Activated naive CD4-positive, alpha-beta T cell treated with anti-CD3 and anti-CD28 coated beads for 36 hours (primary cell): ENCODE measurements at regions of chr19 and their contacts with region 1.

Region 1: DNA sequence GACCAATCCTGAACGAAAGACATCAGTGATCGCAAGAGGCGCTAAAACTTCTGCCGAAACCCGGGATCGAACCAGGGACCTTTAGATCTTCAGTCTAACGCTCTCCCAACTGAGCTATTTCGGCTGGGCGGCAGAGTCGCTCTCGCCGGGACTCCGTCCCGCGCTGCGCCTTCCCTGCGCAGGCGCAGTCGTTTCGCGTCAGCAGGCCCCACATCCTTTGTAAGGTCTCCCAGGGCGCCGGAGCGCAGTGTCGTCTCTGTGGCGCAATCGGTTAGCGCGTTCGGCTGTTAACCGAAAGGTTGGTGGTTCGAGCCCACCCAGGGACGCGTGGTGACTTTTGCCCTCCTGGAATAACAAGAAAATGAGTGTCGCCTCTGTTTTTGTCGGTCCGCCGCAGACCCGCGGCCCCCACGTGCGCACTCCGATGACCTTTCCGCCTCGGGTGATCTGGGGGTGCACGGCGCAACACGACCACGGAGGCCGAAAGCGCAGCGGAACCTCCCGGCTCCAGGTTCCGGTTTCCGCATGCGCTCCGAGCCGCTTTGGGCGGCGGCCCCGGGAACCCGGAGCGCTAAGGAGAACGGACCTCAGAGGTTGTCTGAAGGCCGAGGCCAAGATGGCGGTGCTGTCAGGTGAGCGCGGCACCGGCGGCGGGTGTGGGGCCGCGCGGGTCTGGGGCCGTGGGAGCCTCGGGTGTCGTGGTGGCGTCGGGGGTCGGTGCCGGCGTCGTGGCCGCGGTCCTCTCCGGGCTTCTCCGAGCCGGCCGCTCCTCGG is at the start of gene NDUFS7:
- DNase-seq: peak; percentile 93
- H3K4me3 Mint-ChIP-seq: peak within 1 kb of the TSS; percentile 84
- H3K27ac Mint-ChIP-seq: peak within 1 kb of the TSS; percentile 98
- H3K4me1 Mint-ChIP-seq: peaks cover 26% of the 10 kb centered on the region
- H3K27me3 Mint-ChIP-seq: peaks cover 3% of the 10 kb centered on the region
- total RNA-seq, gene NDUFS7: 138 to 148 TPM

Region 2: GRCh38 chr19:1103708-1104310 is 279.7 kb before region 1 on chr19 and contains the start of gene GPX4:
- CTCF ChIA-PET with region 1: no interaction called
- intact Hi-C with region 1: no loop called
- DNase-seq: peak; percentile 99
- H3K4me3 Mint-ChIP-seq: peak within 1 kb of the TSS; percentile 72
- H3K27ac Mint-ChIP-seq: peak within 1 kb of the TSS; percentile 79
- H3K4me1 Mint-ChIP-seq: peaks cover 54% of the 10 kb centered on the region
- H3K27me3 Mint-ChIP-seq: no peaks in the 10 kb centered on the region
- total RNA-seq, gene GPX4: 244 to 253 TPM

Region 3: DNA sequence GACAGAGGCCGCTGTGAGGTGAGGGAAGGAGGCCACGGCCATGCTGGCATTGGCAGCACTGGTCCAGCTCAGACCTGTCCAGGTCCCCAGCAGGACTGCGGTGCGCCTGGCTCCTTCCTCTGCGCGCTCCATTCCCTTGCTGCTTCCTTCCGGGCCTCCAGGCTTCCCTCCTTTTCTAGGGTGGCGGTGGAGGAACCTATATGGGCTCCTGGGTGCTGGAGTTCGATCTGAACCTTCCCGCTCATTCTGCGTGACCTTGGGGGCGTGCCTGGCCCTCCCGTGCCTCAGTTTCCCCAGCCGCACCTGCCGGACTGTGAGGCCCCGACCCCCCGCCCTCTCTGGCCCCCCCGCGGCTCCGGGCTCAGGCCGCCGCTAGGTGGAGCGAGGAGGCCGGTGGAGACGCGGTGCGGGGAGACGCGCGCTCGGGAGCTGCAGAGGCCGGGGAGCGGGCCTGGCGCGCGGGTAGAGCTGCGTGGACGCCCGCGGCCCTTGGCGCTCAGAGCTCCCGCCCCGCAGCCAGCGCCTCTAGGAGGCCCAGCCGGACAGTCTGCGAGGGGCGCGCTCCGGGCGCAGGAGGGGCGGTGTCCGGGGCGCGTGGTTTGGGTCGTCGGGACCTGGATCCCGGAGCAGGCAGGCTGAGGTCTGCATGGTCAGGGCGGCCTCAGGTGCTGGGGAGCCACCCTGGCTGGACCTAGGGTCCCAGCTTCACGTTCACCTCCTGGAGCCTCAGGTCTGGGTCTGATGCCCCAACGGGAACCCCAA is 67.8 kb before region 1 on chr19:
- CTCF ChIA-PET with region 1: interaction called, 4 read pairs
- intact Hi-C with region 1: loop called (anchors 5 kb)
- DNase-seq: peak; percentile 51
- H3K4me3 Mint-ChIP-seq: no peak overlapping the region
- H3K27ac Mint-ChIP-seq: no peak overlapping the region
- H3K4me1 Mint-ChIP-seq: no peaks in the 10 kb centered on the region
- H3K27me3 Mint-ChIP-seq: peaks cover 24% of the 10 kb centered on the region

Region 4: DNA sequence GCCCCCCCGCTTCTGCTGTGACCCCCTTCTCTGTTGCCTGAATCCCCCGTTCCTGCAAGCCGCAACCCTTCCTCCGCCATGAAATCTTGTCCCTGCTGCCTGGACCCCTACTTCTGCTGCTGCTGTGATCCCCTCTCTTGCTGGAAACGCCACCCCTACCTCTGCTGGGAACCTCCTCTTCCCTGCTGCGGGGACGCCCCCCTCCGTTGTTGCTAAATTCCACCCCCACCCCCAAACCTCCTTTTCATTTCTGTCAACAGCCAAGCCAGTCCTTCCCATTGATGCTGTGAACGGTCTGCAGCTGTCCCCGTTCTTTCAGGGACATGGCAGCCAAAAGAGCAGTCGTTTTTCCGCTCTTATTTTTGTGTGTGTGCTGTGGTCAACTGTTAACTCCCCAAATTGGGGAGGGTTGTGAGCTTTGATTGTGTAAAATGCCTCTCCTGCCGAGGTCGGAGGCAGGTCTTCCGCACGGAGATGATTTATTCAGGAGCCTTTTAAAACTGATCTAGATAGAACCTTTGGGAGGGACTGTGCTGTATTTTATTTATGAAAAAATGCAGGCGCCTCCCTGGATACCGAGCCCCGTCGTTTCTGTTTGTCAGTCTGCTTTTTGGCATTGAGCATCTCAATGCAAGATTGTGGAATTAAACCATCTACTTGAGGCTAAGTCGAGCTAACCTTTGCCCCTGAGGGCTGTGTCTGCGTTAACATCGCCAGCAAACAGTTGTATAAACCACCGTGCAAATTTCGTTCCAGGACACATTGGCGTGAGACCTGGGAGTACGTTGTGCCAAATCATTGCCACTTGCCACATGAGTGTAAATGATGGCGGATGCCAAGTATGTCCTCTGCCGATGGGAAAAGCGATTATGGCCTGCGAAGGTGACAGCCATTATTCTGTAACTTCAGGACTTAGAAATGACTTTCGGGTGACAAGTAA is 27.7 kb before region 1 on chr19:
- CTCF ChIA-PET with region 1: no interaction called
- intact Hi-C with region 1: loop called (anchors 1 kb)
- DNase-seq: peak; percentile 41
- H3K4me3 Mint-ChIP-seq: peak overlapping the region; percentile 83
- H3K27ac Mint-ChIP-seq: peak overlapping the region; percentile 59
- H3K4me1 Mint-ChIP-seq: peaks cover 15% of the 10 kb centered on the region
- H3K27me3 Mint-ChIP-seq: no peaks in the 10 kb centered on the region

Region 5: DNA sequence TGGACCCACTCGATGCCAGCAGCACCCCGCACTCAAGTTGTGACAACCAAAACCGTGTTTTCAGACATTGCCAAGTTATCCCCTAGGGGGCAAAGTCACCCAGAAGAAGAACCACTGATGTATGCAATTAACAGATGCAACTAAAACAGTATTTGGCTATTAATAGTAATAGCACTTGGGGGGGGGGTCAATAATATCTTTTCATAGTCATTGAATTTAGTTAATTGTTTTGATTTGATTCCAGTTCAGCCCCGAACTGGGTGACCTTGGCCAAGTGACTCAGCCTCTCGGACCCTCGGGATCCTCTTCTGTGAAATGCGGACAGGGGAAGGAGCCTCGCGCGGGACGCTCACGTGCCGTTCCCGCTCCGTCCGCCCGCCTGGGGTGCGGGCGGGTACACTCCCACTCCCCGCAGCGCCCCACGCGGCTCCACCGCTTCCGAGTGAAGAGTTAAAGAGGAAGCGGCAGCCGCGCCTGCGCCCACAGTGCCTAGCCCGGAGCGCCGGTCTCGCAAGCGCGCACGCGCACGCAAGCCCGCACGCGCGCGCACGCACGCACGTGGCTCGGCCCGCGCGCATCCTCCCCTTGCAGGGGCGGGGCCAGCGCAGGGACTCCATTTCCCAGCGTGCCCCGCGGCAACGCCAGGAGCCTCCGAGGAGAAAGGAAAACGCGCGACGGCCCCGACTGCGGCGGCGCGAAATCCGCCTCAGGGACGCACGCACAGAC is 23.4 kb after region 1 on chr19:
- CTCF ChIA-PET with region 1: no interaction called
- intact Hi-C with region 1: loop called (anchors 1 kb)
- DNase-seq: peak; percentile 98
- H3K4me3 Mint-ChIP-seq: peak overlapping the region; percentile 69
- H3K27ac Mint-ChIP-seq: peak overlapping the region; percentile 81
- H3K4me1 Mint-ChIP-seq: peaks cover 43% of the 10 kb centered on the region
- H3K27me3 Mint-ChIP-seq: peaks cover 5% of the 10 kb centered on the region

Region 6: DNA sequence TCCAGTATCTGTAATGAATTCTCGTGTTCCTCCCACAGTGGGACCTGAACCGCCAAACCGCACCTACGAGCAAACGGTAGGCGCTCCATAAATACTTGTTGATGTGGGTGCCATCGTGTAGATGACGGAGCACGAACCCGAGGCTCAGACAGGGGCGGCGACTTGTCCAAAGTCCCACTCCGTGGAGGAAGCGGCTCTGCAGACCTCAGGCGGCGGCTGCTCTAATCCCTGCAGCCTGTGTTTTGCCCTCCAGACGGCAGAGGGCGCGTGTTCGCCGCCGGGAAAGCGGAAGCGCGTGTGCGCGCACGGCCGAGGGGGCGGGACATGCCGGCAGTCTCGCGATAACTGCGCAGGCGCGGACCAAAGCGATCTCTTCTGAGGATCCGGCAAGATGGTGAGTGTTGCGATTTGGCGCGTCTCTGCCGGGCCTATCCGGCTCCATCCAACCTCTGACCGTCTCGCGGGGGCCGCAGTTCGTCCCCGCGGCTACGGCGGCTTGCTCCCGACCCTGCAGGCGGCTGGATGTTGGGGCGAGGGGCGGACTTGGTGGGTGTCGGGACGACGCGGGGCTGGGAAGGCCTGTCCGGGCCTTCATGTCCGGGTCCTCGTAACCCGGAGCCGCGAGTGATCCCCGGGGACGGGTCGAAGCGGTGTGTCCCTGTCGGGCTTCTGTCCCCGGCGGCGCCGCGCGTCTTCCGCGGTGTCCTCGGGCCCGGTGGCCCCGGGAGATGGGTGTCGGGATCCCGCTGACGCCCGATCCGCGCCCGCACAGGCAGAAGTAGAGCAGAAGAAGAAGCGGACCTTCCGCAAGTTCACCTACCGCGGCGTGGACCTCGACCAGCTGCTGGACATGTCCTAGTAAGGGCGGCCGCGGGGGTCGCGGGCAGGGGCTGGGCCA is 54.8 kb after region 1 on chr19 and contains the start of gene RPS15:
- CTCF ChIA-PET with region 1: no interaction called
- intact Hi-C with region 1: loop called (anchors 2 kb)
- DNase-seq: peak; percentile 96
- H3K4me3 Mint-ChIP-seq: peak within 1 kb of the TSS; percentile 98
- H3K27ac Mint-ChIP-seq: peak within 1 kb of the TSS; percentile 99
- H3K4me1 Mint-ChIP-seq: peaks cover 40% of the 10 kb centered on the region
- H3K27me3 Mint-ChIP-seq: no peaks in the 10 kb centered on the region
- total RNA-seq, gene RPS15: 1,902 to 1,906 TPM

Region 7: GRCh38 chr19:1478934-1479707 is 95.6 kb after region 1 on chr19 and contains the start of gene C19orf25:
- CTCF ChIA-PET with region 1: no interaction called
- intact Hi-C with region 1: loop called (anchors 1 kb)
- DNase-seq: peak; percentile 96
- H3K4me3 Mint-ChIP-seq: peak within 1 kb of the TSS; percentile 99
- H3K27ac Mint-ChIP-seq: peak within 1 kb of the TSS; percentile 95
- H3K4me1 Mint-ChIP-seq: peaks cover 15% of the 10 kb centered on the region
- H3K27me3 Mint-ChIP-seq: no peaks in the 10 kb centered on the region
- total RNA-seq, gene C19orf25: 17.5 to 20.8 TPM

Region 8: GRCh38 chr19:1592755-1593500 is 209.4 kb after region 1 on chr19 and contains the start of gene MBD3:
- CTCF ChIA-PET with region 1: no interaction called
- intact Hi-C with region 1: loop called (anchors 1 kb)
- DNase-seq: peak; percentile 84
- H3K4me3 Mint-ChIP-seq: peak within 1 kb of the TSS; percentile 96
- H3K27ac Mint-ChIP-seq: peak within 1 kb of the TSS; percentile 82
- H3K4me1 Mint-ChIP-seq: peaks cover 20% of the 10 kb centered on the region
- H3K27me3 Mint-ChIP-seq: no peaks in the 10 kb centered on the region
- total RNA-seq, gene MBD3: 58.1 to 63.7 TPM